ENCODE measurements at regions of chrX and their contacts with region 1.

Region 1: DNA sequence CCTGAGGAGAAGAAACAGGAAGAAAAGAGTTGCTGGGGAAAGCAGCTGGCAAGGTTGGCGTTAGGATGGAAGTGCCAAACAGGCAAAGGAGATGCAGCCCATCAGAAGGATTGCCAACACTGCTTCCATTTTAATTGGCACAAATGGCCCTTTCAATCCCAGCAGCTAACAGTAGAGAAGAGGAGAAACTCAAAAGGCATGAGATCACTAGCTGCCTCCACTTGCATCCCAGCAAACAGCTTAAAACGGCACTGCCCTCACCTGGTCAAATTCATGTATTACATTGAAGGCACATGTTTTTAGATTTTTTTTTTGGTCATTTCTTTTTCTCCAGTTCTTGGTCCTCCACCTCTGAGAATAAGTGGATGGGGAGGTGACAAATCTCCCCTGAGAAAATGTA is 14.9 kb upstream of the LOC101059915 start:
- DNase-seq: peak; percentile 44
- CTCF ChIP-seq: peak; percentile 54

Region 2: GRCh38 chrX:71859637-71860036 is 207.2 kb after region 1 on chrX:
- in situ Hi-C with region 1: loop called (anchors 25 kb)
- DNase-seq: peak; percentile 21
- CTCF ChIP-seq: peak; percentile 65